IMR-90 (cell line): ENCODE measurements at regions of chr2 and their contacts with region 1.

Region 1: GRCh38 chr2:66601624-66602023 is 166.7 kb downstream of the MEIS1 start:
- DNase-seq: no peak
- ATAC-seq: no peak
- H3K4me3 ChIP-seq: no peak overlapping the region
- H3K27ac ChIP-seq: peak overlapping the region; percentile 33; the same call in 1 of the 2 replicates
- H3K4me1 ChIP-seq: no peaks in the 10 kb centered on the region; the same call in 1 of the 2 replicates
- H3K27me3 ChIP-seq: no peaks in the 10 kb centered on the region
- CTCF ChIP-seq: no peak
- POLR2A ChIP-seq: no peak
- RAD21 ChIP-seq: no peak

Region 2: DNA sequence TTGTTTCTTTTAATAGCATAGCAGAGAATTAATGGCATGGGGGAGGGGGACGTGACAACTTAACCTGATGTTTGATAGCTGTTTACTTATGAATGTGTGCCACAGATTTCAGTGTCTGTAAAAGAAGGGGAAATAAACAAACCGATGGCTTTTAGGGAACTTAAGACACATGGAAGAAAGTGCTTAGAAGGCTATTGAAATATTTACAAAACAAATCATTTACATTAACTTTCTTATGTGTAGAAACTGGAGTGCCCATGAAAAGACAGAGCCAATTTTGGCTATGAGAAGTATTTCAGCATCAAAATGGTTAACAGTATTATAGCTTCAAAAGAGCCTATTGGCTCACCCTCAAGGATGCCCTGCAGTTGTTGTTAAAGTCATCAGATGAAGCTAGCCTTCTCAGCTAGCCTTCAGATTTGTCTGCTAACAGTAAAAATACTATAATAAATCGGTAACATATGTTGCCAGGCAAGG is 89.4 kb after region 1 on chr2:
- CTCF ChIA-PET with region 1: no interaction called
- POLR2A ChIA-PET with region 1: no interaction called
- dilution Hi-C with region 1: no loop called
- in situ Hi-C with region 1: no loop called
- intact Hi-C with region 1: loop called (anchors 5 kb)
- DNase-seq: peak; percentile 6
- ATAC-seq: peak; percentile 27; the same call in 1 of the 2 replicates
- H3K4me3 ChIP-seq: no peak overlapping the region
- H3K27ac ChIP-seq: no peak overlapping the region
- H3K4me1 ChIP-seq: peaks cover 4% of the 10 kb centered on the region; the same call in 1 of the 2 replicates
- H3K27me3 ChIP-seq: no peaks in the 10 kb centered on the region
- CTCF ChIP-seq: no peak
- POLR2A ChIP-seq: no peak
- RAD21 ChIP-seq: no peak